Naive thymus-derived CD4-positive, alpha-beta T cell (primary cell): ENCODE measurements at regions of chr12 and their contacts with region 1.

Region 1: GRCh38 chr12:49018261-49019119 is at the start of gene PRKAG1:
- DNase-seq: peak; percentile 93 to 98 (median 97)
- ATAC-seq: peak; percentile 94
- H3K4me3 ChIP-seq: peak within 1 kb of the TSS; percentile 78
- H3K4me3 Mint-ChIP-seq: peak within 1 kb of the TSS; percentile 79 to 98 (median 94)
- H3K27ac ChIP-seq: peak within 1 kb of the TSS; percentile 86
- H3K27ac Mint-ChIP-seq: peak within 1 kb of the TSS; percentile 96 to 100 (median 99)
- H3K4me1 ChIP-seq: peaks cover 16 to 19% of the 10 kb centered on the region in 2 donors
- H3K4me1 Mint-ChIP-seq: peaks cover 23 to 53% (median 45%) of the 10 kb centered on the region in 7 donors
- H3K27me3 ChIP-seq: no peaks in the 10 kb centered on the region
- H3K27me3 Mint-ChIP-seq: no peaks in the 10 kb centered on the region
- total RNA-seq, gene PRKAG1: 34.0 to 74.4 (median 50.6) TPM

Region 2: DNA sequence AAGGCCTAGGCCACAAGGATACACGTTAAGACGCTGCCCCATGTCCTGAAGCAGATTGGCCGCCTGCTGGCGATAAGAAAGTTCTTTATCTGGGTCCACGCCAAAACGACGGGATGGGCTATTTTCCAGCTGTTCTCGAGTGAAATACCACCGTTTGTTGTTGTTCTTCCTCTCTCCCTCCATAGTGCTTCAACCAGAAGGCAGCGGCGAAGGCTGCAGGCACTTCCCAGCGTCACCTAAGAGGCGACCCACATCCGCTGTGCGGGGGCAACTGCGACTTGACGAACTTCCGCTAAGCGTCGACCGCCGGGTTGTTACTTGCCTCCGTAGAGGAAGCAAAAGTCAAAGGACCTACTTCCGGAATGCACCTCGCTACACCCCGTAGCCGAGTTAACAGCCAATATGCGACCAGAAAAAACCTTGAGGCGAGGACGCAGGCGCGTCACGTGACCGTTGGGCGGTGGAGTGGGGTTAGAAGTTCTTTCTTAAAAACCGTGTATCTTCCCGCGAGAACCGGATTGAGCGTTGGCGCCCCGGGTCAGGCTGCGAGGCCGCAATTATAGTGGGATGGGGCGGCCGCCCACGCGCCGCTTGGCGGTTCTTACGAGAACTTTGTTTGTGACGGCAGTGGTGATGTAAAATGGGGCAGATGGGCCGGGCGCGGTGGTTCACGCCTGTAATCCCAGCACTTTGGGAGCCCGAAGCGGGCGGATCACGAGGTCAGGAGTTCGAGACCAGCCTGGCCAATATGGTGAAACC is 301.8 kb before region 1 on chr12 and contains the start of gene CCNT1:
- CTCF ChIA-PET with region 1: no interaction called
- POLR2A ChIA-PET with region 1: no interaction called
- intact Hi-C with region 1: loop called in 1 of 2 experiments (anchors 1 kb)
- DNase-seq: peak; percentile 90 to 100 (median 99)
- ATAC-seq: peak; percentile 93
- H3K4me3 ChIP-seq: peak within 1 kb of the TSS; percentile 88
- H3K4me3 Mint-ChIP-seq: peak within 1 kb of the TSS; percentile 89 to 98 (median 94)
- H3K27ac ChIP-seq: peak within 1 kb of the TSS; percentile 95
- H3K27ac Mint-ChIP-seq: peak within 1 kb of the TSS; percentile 95 to 99 (median 98)
- H3K4me1 ChIP-seq: peaks cover 14 to 24% of the 10 kb centered on the region in 2 donors
- H3K4me1 Mint-ChIP-seq: peaks cover 21 to 50% (median 37%) of the 10 kb centered on the region in 7 donors
- H3K27me3 ChIP-seq: no peaks in the 10 kb centered on the region
- H3K27me3 Mint-ChIP-seq: peaks cover 0 to 4% (median 0%) of the 10 kb centered on the region in 5 donors
- total RNA-seq, gene CCNT1: 62.5 to 127 (median 76.6) TPM

Region 3: GRCh38 chr12:48903982-48904411 is 114.5 kb before region 1 on chr12:
- CTCF ChIA-PET with region 1: no interaction called
- POLR2A ChIA-PET with region 1: no interaction called
- intact Hi-C with region 1: loop called in 1 of 2 experiments (anchors 1 kb)
- DNase-seq: peak; percentile 64 to 89 (median 83)
- ATAC-seq: peak; percentile 100
- H3K4me3 ChIP-seq: peak overlapping the region; percentile 60
- H3K4me3 Mint-ChIP-seq: peak overlapping the region; percentile 48 to 81 (median 78)
- H3K27ac ChIP-seq: no peak overlapping the region
- H3K27ac Mint-ChIP-seq: peak overlapping the region in 5 of 9 donors; percentile 32 to 84 (median 57)
- H3K4me1 ChIP-seq: peaks cover 0 to 9% of the 10 kb centered on the region in 2 donors
- H3K4me1 Mint-ChIP-seq: peaks cover 0 to 11% (median 8%) of the 10 kb centered on the region in 7 donors
- H3K27me3 ChIP-seq: no peaks in the 10 kb centered on the region
- H3K27me3 Mint-ChIP-seq: peaks cover 0 to 7% (median 0%) of the 10 kb centered on the region in 5 donors

Region 4: DNA sequence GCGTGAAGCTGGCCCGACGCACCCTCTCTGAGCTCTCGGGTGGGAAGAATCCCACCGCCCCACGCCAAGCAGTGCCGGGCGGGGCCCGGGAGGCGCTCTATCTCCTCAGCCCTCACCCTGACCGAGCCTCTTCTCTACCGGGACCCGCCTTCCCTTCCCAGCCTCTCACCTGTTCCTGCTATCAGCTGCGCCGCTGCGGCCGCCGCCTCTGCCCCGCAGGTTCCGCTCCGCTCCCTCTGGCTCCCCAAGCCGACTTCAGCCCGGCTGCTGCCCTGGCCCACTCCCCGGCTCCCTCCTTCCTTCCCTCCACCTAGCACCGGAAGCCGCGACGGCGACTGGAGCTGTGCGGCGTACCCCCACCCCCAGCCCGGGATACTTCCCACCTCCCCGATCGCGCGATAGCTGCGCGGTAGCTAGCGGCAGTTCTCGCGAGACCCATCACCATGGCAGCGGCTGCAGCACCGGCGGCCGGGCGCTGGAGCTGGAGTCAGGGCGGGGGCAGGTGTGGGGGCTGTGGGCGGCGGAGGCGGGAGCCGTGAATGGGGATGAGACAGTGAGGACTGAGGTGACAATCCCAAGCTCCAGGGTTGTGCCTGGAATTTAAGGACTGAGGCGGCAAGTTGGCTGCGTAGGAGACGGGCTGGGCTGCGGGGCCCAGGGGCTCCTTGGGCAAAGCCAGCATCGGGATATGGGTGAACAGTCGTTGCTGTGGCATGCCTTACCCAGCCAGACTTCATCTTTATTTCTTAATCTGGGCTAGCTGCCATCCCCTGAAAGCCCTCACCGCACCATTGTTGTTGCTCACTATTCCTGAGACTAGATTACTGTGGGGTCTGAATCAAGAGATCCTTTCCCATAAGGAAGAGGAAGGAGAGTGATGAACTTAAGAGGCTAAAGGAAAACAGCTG is 61.1 kb before region 1 on chr12 and contains the start of gene ARF3:
- CTCF ChIA-PET with region 1: no interaction called
- POLR2A ChIA-PET with region 1: no interaction called
- intact Hi-C with region 1: loop called in 1 of 2 experiments (anchors 1 kb)
- DNase-seq: peak; percentile 84 to 92 (median 91)
- ATAC-seq: peak; percentile 96
- H3K4me3 ChIP-seq: peak within 1 kb of the TSS; percentile 86
- H3K4me3 Mint-ChIP-seq: peak within 1 kb of the TSS; percentile 90 to 99 (median 96)
- H3K27ac ChIP-seq: peak within 1 kb of the TSS; percentile 80
- H3K27ac Mint-ChIP-seq: peak within 1 kb of the TSS; percentile 78 to 96 (median 88)
- H3K4me1 ChIP-seq: peaks cover 17 to 22% of the 10 kb centered on the region in 2 donors
- H3K4me1 Mint-ChIP-seq: peaks cover 27 to 55% (median 47%) of the 10 kb centered on the region in 7 donors
- H3K27me3 ChIP-seq: no peaks in the 10 kb centered on the region
- H3K27me3 Mint-ChIP-seq: peaks cover 0 to 29% (median 3%) of the 10 kb centered on the region in 5 donors
- total RNA-seq, gene ARF3: 48.7 to 137 (median 56.1) TPM

Region 5: DNA sequence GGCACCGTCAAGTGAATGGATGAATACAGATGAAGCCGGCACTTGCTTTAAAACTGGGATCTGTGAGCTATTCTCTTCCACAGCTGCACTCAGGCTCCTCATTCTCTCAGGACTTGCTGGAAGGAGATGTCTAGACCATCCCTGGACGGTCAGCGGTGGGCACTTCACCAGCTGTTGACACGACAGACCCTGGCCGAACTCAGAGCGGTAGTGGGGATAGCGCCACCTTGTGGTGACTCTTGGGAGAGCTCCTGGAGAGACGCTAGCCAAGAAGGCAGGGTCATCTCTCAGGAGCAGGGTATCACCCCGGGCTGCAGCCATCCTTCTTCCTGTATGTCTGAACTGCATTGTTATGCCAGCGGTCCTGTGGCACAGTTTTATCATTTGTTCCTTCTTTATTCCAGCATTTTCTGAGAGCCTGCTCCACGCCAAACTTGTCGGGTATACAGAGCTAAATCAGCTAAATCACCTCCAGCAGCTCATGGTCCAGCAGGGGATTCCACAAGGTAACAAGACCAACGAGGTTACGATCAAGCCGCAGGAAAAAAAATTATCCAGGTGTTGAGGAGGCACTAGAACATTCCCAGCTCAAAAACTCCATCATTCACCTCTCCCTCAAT is 30.4 kb before region 1 on chr12:
- CTCF ChIA-PET with region 1: interaction called, 10 read pairs
- POLR2A ChIA-PET with region 1: interaction called, 3 read pairs
- intact Hi-C with region 1: no loop called
- DNase-seq: peak in 8 of 9 donors; percentile 45 to 82 (median 60)
- ATAC-seq: peak; percentile 90
- H3K4me3 ChIP-seq: no peak overlapping the region
- H3K4me3 Mint-ChIP-seq: no peak overlapping the region
- H3K27ac ChIP-seq: no peak overlapping the region
- H3K27ac Mint-ChIP-seq: no peak overlapping the region
- H3K4me1 ChIP-seq: no peaks in the 10 kb centered on the region
- H3K4me1 Mint-ChIP-seq: peaks cover 0 to 12% (median 8%) of the 10 kb centered on the region in 7 donors
- H3K27me3 ChIP-seq: no peaks in the 10 kb centered on the region
- H3K27me3 Mint-ChIP-seq: peaks cover 21 to 79% (median 31%) of the 10 kb centered on the region in 5 donors

Region 6: DNA sequence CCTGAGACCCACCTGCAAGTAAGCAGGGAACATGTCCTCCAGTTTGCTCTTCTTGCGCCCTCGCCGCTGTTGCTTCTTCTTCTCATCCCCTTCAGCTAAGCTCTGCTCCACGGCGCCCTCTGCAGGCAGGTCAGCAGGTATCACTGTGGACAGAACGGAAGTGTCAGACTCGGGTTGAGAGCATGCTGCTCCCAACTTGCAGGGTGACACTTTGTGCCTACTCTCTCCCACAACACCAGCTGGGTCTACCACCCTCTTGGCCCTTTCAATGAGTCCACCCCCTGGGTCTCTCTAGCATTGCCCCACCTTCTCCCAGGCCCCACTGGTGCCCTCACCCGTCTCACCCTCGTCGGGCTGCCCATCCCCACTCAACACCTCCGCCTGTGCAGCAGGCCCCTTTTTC is 25.4 kb after region 1 on chr12:
- CTCF ChIA-PET with region 1: interaction called, 6 read pairs
- POLR2A ChIA-PET with region 1: no interaction called
- intact Hi-C with region 1: loop called in 1 of 2 experiments (anchors 1 kb)
- DNase-seq: peak; percentile 65 to 80 (median 75)
- ATAC-seq: peak; percentile 90
- H3K4me3 ChIP-seq: no peak overlapping the region
- H3K4me3 Mint-ChIP-seq: peak overlapping the region in 1 of 10 donors; percentile 7
- H3K27ac ChIP-seq: peak overlapping the region; percentile 40
- H3K27ac Mint-ChIP-seq: peak overlapping the region in 5 of 9 donors; percentile 38 to 81 (median 78)
- H3K4me1 ChIP-seq: peaks cover 0 to 9% of the 10 kb centered on the region in 2 donors
- H3K4me1 Mint-ChIP-seq: peaks cover 0 to 10% (median 4%) of the 10 kb centered on the region in 7 donors
- H3K27me3 ChIP-seq: no peaks in the 10 kb centered on the region
- H3K27me3 Mint-ChIP-seq: no peaks in the 10 kb centered on the region

Region 7: GRCh38 chr12:49069507-49070346 is 51.2 kb after region 1 on chr12 and contains the start of gene RHEBL1:
- CTCF ChIA-PET with region 1: no interaction called
- POLR2A ChIA-PET with region 1: no interaction called
- intact Hi-C with region 1: loop called in 1 of 2 experiments (anchors 1 kb)
- DNase-seq: peak; percentile 93 to 99 (median 96)
- ATAC-seq: peak; percentile 100
- H3K4me3 ChIP-seq: peak within 1 kb of the TSS; percentile 99
- H3K4me3 Mint-ChIP-seq: peak within 1 kb of the TSS; percentile 86 to 99 (median 96)
- H3K27ac ChIP-seq: peak within 1 kb of the TSS; percentile 74
- H3K27ac Mint-ChIP-seq: peak within 1 kb of the TSS; percentile 77 to 92 (median 86)
- H3K4me1 ChIP-seq: peaks cover 5 to 13% of the 10 kb centered on the region in 2 donors
- H3K4me1 Mint-ChIP-seq: peaks cover 14 to 31% (median 18%) of the 10 kb centered on the region in 7 donors
- H3K27me3 ChIP-seq: no peaks in the 10 kb centered on the region
- H3K27me3 Mint-ChIP-seq: no peaks in the 10 kb centered on the region
- total RNA-seq, gene RHEBL1: 1.8 to 9.4 (median 3.3) TPM